ENCODE measurements at regions of chr9 and their contacts with region 1.

Region 1: GRCh38 chr9:121059998-121060636 is 10.0 kb upstream of the C5 start:
- DNase-seq: peak; percentile 32 to 61 (median 37)
- H3K4me3 ChIP-seq: no peak overlapping the region
- H3K27ac ChIP-seq: no peak overlapping the region
- H3K4me1 ChIP-seq: peaks cover 0 to 6% of the 10 kb centered on the region in 2 donors
- H3K27me3 ChIP-seq: no peaks in the 10 kb centered on the region
- CTCF ChIP-seq: peak; percentile 62 to 82 (median 72)
- POLR2A ChIP-seq: no peak

Region 2: GRCh38 chr9:120755827-120756434 is 304.2 kb before region 1 on chr9:
- intact Hi-C with region 1: loop called (anchors 5 to 10 kb)
- DNase-seq: peak in 6 of 7 donors; percentile 29 to 79 (median 62)
- H3K4me3 ChIP-seq: no peak overlapping the region
- H3K27ac ChIP-seq: no peak overlapping the region
- H3K4me1 ChIP-seq: peaks cover 0 to 10% of the 10 kb centered on the region in 2 donors
- H3K27me3 ChIP-seq: no peaks in the 10 kb centered on the region
- CTCF ChIP-seq: peak; percentile 80 to 94 (median 91)
- POLR2A ChIP-seq: no peak

Region 3: GRCh38 chr9:120767456-120768167 is 292.5 kb before region 1 on chr9:
- intact Hi-C with region 1: loop called in 1 of 2 experiments (anchors 10 kb)
- DNase-seq: no peak
- H3K4me3 ChIP-seq: no peak overlapping the region
- H3K27ac ChIP-seq: no peak overlapping the region
- H3K4me1 ChIP-seq: peaks cover 8 to 11% of the 10 kb centered on the region in 2 donors
- H3K27me3 ChIP-seq: no peaks in the 10 kb centered on the region
- CTCF ChIP-seq: no peak
- POLR2A ChIP-seq: no peak

Region 4: GRCh38 chr9:120951960-120952618 is 108.0 kb before region 1 on chr9:
- intact Hi-C with region 1: no loop called
- DNase-seq: no peak
- H3K4me3 ChIP-seq: no peak overlapping the region
- H3K27ac ChIP-seq: peak overlapping the region in 1 of 5 donors; percentile 86
- H3K4me1 ChIP-seq: peaks cover 0 to 9% of the 10 kb centered on the region in 2 donors
- H3K27me3 ChIP-seq: no peaks in the 10 kb centered on the region
- CTCF ChIP-seq: no peak
- POLR2A ChIP-seq: no peak

Region 5: GRCh38 chr9:120985810-120986222 is 74.3 kb before region 1 on chr9:
- intact Hi-C with region 1: loop called (anchors 5 kb)
- DNase-seq: peak in 4 of 7 donors; percentile 18 to 37 (median 26)
- H3K4me3 ChIP-seq: no peak overlapping the region
- H3K27ac ChIP-seq: no peak overlapping the region
- H3K4me1 ChIP-seq: peaks cover 8 to 22% of the 10 kb centered on the region in 2 donors
- H3K27me3 ChIP-seq: no peaks in the 10 kb centered on the region
- CTCF ChIP-seq: peak; percentile 37 to 77 (median 64)
- POLR2A ChIP-seq: no peak

Region 6: GRCh38 chr9:121121582-121122087 is 61.5 kb after region 1 on chr9:
- intact Hi-C with region 1: no loop called
- DNase-seq: peak; percentile 95 to 99 (median 99)
- H3K4me3 ChIP-seq: peak overlapping the region in 3 of 4 donors; percentile 8 to 67 (median 49)
- H3K27ac ChIP-seq: peak overlapping the region in 4 of 5 donors; percentile 23 to 67 (median 52)
- H3K4me1 ChIP-seq: peaks cover 8 to 18% of the 10 kb centered on the region in 2 donors
- H3K27me3 ChIP-seq: no peaks in the 10 kb centered on the region
- CTCF ChIP-seq: peak; percentile 23 to 64 (median 50)
- POLR2A ChIP-seq: peak in 1 of 2 donors; percentile 83

Region 7: GRCh38 chr9:121246821-121247561 is 186.9 kb after region 1 on chr9:
- intact Hi-C with region 1: no loop called
- DNase-seq: no peak
- H3K4me3 ChIP-seq: no peak overlapping the region
- H3K27ac ChIP-seq: no peak overlapping the region
- H3K4me1 ChIP-seq: peaks cover 0 to 5% of the 10 kb centered on the region in 2 donors
- H3K27me3 ChIP-seq: no peaks in the 10 kb centered on the region
- CTCF ChIP-seq: no peak
- POLR2A ChIP-seq: no peak